A549 (cell line): ENCODE measurements at regions of chrX and their contacts with region 1.

Region 1: DNA sequence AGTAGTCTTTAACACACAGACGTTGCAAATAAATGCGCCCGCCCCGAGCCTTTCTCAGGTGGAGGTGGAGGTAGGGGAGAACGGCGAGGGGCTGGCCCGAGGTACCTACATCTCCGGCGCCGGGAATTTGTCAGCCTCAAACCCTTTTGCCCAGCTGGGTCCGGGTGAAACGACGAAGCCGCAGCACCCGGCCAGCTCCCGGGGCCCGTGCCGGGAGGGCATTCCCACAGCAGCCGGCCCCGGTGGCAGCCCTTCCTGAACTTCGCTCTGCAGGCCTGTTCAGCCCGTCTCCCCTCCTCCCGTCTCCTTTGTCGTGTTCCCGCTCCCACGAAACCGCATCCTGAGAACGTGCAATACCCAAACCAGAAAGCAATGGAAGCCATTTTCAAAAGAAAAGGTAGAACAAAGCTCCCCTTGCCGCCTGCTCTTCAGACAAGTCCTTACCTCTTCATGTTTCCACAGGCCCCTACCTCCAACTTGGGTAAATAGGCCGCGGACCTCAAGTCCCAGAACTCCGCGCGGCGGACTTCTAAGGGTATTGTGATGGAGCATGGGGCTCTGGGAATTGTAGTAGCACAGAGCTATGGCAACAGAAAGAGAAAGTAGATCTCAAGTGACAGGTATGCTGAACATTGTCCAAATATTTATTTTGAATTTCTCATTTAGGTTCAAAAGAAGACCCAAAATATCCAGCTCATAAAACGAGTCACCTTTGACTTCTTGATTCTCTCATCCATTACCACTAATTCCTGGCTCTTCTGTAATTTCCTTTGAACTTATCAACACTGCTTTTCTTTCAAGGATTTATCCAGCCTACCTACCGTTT is at the start of gene RBM41:
- DNase-seq: peak; percentile 36 to 85
- ATAC-seq: peak; percentile 100
- H3K4me3 ChIP-seq: peak within 1 kb of the TSS; percentile 73
- H3K27ac ChIP-seq: peak within 1 kb of the TSS; percentile 84 to 93
- H3K4me1 ChIP-seq: peaks cover 15% of the 10 kb centered on the region; the same call in 1 of the 3 replicates
- CTCF ChIP-seq: no peak
- EP300 ChIP-seq: no peak
- POLR2A ChIP-seq: 0 out of 2 replicates have a peak, but pooled peaks have one; percentile 9
- RAD21 ChIP-seq: no peak
- polyA plus RNA-seq, gene RBM41: 20.5 and 25.8 TPM in 2 replicates

Region 2: GRCh38 chrX:106933041-106933961 is 185.2 kb before region 1 on chrX:
- CTCF ChIA-PET with region 1: no interaction called
- POLR2A ChIA-PET with region 1: no interaction called
- DNase-seq: peak; percentile 61 to 77
- ATAC-seq: peak; percentile 73 to 87
- H3K4me3 ChIP-seq: no peak overlapping the region
- H3K27ac ChIP-seq: peak overlapping the region; percentile 92 to 99
- H3K4me1 ChIP-seq: peaks cover 93% of the 10 kb centered on the region
- CTCF ChIP-seq: no peak
- EP300 ChIP-seq: peak; percentile 88 to 89; a peak in 4 of 5 replicates
- POLR2A ChIP-seq: no peak
- RAD21 ChIP-seq: no peak

Region 3: DNA sequence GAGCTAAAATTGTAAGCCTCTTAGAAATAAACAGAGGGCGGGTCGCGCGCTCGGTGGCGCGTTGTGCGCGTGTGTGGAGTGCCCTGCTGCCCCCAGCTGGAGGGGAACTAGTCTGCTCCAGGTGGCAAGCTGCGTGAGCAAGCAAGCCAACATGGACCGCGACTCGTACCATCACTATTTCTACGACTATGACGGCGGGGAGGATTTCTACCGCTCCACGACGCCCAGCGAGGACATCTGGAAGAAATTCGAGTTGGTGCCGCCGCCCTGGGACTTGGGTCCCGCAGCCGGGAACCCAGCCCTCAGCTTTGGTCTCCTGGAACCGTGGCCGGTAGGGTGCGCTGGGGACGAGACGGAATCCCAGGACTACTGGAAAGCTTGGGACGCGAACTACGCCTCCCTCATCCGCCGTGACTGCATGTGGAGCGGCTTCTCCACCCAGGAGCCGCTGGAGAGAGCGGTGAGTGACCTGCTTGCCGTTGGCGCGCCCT is 153.9 kb after region 1 on chrX:
- CTCF ChIA-PET with region 1: interaction called, 10 read pairs
- POLR2A ChIA-PET with region 1: interaction called, 3 read pairs
- DNase-seq: peak; percentile 50 to 64
- ATAC-seq: peak; percentile 98 to 99
- H3K4me3 ChIP-seq: peak overlapping the region; percentile 50
- H3K27ac ChIP-seq: peak overlapping the region; percentile 68 to 86
- H3K4me1 ChIP-seq: 0 out of 3 replicates have a peak, but pooled peaks cover 3% of the 10 kb centered on the region
- CTCF ChIP-seq: peak; percentile 72
- EP300 ChIP-seq: no peak
- POLR2A ChIP-seq: no peak
- RAD21 ChIP-seq: peak; percentile 32 to 73